CD4-positive, alpha-beta T cell (primary cell): ENCODE measurements at regions of chr19 and their contacts with region 1.

Region 1: GRCh38 chr19:15379083-15379995 is at the start of gene AKAP8:
- DNase-seq: peak; percentile 96 to 100 (median 98)
- ATAC-seq: peak; percentile 90
- H3K4me3 ChIP-seq: peak within 1 kb of the TSS; percentile 75
- H3K4me3 Mint-ChIP-seq: peak within 1 kb of the TSS; percentile 100
- H3K27ac ChIP-seq: peak within 1 kb of the TSS; percentile 96
- H3K27ac Mint-ChIP-seq: peak within 1 kb of the TSS; percentile 97
- H3K4me1 ChIP-seq: peaks cover 35% of the 10 kb centered on the region
- H3K4me1 Mint-ChIP-seq: peaks cover 48% of the 10 kb centered on the region
- H3K27me3 ChIP-seq: no peaks in the 10 kb centered on the region
- H3K27me3 Mint-ChIP-seq: no peaks in the 10 kb centered on the region
- CTCF ChIP-seq: no peak
- total RNA-seq, gene AKAP8: 87.5 to 90.1 TPM

Region 2: DNA sequence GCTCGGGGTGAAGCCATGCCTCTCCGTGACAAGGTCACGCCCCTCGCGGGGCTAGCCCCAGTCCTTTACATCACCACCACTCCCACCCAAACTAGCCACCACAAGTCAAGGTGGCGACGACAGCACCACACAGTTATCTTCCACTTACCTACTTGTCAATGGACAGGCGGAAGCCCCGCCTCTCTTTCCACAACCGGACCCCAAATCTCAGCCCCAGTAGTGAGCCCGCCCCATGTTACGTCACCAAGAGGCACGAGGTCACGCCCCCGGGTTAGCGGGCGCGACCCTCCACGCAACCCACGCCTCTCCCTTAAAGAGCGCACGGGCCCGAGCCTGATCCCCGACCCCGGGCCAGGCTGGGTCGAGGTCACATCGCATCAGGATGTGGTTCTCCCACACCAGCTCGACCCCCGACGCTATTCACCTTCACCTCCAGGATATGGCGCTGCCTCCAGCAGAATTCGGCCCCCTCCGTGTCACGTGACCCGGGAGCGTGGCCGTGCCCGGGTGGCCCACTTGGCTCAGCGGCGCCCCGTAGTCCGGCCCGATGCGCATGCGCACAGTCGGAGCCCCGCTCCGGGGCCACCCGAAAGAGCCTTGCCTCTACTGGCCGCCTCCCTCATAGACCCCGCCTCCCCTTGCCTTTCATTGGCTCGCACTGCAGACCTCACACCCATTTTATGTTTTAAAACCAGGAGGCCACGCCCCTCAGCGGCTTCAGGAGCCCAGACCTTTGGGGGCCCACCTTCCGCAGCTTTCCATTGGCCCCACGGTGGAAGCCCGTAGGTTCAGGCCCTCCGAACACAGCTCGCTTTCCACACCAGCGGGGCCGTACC is 253.9 kb before region 1 on chr19:
- CTCF ChIA-PET with region 1: no interaction called
- POLR2A ChIA-PET with region 1: interaction called, 14 read pairs
- intact Hi-C with region 1: no loop called
- DNase-seq: peak; percentile 92 to 98 (median 96)
- ATAC-seq: peak; percentile 85
- H3K4me3 ChIP-seq: peak overlapping the region; percentile 77
- H3K4me3 Mint-ChIP-seq: peak overlapping the region; percentile 99
- H3K27ac ChIP-seq: peak overlapping the region; percentile 87 to 97
- H3K27ac Mint-ChIP-seq: peak overlapping the region; percentile 96
- H3K4me1 ChIP-seq: peaks cover 32% of the 10 kb centered on the region
- H3K4me1 Mint-ChIP-seq: peaks cover 49% of the 10 kb centered on the region
- H3K27me3 ChIP-seq: no peaks in the 10 kb centered on the region
- H3K27me3 Mint-ChIP-seq: no peaks in the 10 kb centered on the region
- CTCF ChIP-seq: no peak

Region 3: DNA sequence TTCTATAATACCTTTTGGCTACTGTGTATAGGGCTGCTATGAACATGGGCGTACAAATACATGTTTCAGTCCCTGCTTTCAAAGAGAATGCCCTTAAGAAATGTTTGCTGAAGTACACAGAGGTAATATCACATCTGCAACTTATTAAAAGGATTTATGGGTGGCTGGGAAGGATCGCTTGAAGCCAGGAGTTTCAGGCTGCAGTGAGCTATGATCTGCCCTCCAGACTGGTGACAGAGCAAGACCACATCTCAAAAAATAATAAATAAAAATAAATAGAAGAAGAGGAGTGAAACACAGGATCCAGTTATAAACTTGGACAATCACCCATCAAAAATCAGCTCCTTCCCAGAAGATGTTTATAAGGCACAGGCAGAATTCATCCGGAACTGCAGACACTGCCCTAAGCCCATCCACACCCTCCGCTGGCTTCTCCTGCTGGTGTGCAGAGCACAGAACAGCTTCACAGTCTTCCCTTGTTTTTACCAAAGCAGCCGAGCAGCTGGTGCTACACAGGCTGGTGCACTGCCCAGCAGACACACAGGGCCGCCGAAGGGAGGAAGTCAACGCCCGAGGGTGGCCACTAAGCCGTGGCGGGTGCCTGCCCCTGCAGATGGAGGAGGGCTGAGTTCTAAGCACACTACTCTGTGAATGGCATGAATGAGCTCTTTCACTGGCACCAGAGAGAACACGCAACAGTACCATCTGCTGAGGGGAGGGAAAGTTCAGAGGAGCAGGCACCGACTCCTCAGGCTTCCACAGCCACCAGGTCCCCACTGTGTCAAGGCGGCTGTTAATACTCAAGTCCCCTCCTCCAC is 91.0 kb before region 1 on chr19:
- CTCF ChIA-PET with region 1: no interaction called
- POLR2A ChIA-PET with region 1: interaction called, 19 read pairs
- intact Hi-C with region 1: loop called in 1 of 2 experiments (anchors 5 kb)
- DNase-seq: peak in 1 of 14 experiments; percentile 24
- ATAC-seq: peak; percentile 23
- H3K4me3 ChIP-seq: no peak overlapping the region
- H3K4me3 Mint-ChIP-seq: peak overlapping the region; percentile 68
- H3K27ac ChIP-seq: no peak overlapping the region
- H3K27ac Mint-ChIP-seq: peak overlapping the region; percentile 75
- H3K4me1 ChIP-seq: peaks cover 96% of the 10 kb centered on the region
- H3K4me1 Mint-ChIP-seq: peaks cover 100% of the 10 kb centered on the region
- H3K27me3 ChIP-seq: no peaks in the 10 kb centered on the region
- H3K27me3 Mint-ChIP-seq: no peaks in the 10 kb centered on the region
- CTCF ChIP-seq: no peak

Region 4: GRCh38 chr19:15332311-15332996 is 46.9 kb before region 1 on chr19 and contains the start of gene BRD4:
- CTCF ChIA-PET with region 1: no interaction called
- POLR2A ChIA-PET with region 1: interaction called, 80 read pairs
- intact Hi-C with region 1: loop called (anchors 2 to 5 kb)
- DNase-seq: peak; percentile 59 to 92 (median 72)
- ATAC-seq: peak; percentile 63
- H3K4me3 ChIP-seq: peak within 1 kb of the TSS; percentile 90
- H3K4me3 Mint-ChIP-seq: peak within 1 kb of the TSS; percentile 96
- H3K27ac ChIP-seq: peak within 1 kb of the TSS; percentile 51 to 67
- H3K27ac Mint-ChIP-seq: peak within 1 kb of the TSS; percentile 88
- H3K4me1 ChIP-seq: peaks cover 45% of the 10 kb centered on the region
- H3K4me1 Mint-ChIP-seq: peaks cover 47% of the 10 kb centered on the region
- H3K27me3 ChIP-seq: no peaks in the 10 kb centered on the region
- H3K27me3 Mint-ChIP-seq: no peaks in the 10 kb centered on the region
- CTCF ChIP-seq: no peak
- total RNA-seq, gene BRD4: 101 to 102 TPM

Region 5: GRCh38 chr19:15466851-15467733 is 87.8 kb after region 1 on chr19:
- CTCF ChIA-PET with region 1: no interaction called
- POLR2A ChIA-PET with region 1: interaction called, 21 read pairs
- intact Hi-C with region 1: no loop called
- DNase-seq: peak in 13 of 14 experiments; percentile 31 to 87 (median 59)
- ATAC-seq: peak; percentile 43
- H3K4me3 ChIP-seq: no peak overlapping the region
- H3K4me3 Mint-ChIP-seq: peak overlapping the region; percentile 74
- H3K27ac ChIP-seq: peak overlapping the region; percentile 31 to 64
- H3K27ac Mint-ChIP-seq: peak overlapping the region; percentile 90
- H3K4me1 ChIP-seq: peaks cover 72% of the 10 kb centered on the region
- H3K4me1 Mint-ChIP-seq: peaks cover 58% of the 10 kb centered on the region
- H3K27me3 ChIP-seq: no peaks in the 10 kb centered on the region
- H3K27me3 Mint-ChIP-seq: no peaks in the 10 kb centered on the region
- CTCF ChIP-seq: no peak

Region 6: GRCh38 chr19:15595069-15595468 is 215.7 kb after region 1 on chr19:
- CTCF ChIA-PET with region 1: no interaction called
- POLR2A ChIA-PET with region 1: no interaction called
- intact Hi-C with region 1: no loop called
- DNase-seq: peak in 2 of 14 experiments; percentile 1 to 20
- ATAC-seq: no peak
- H3K4me3 ChIP-seq: no peak overlapping the region
- H3K4me3 Mint-ChIP-seq: no peak overlapping the region
- H3K27ac ChIP-seq: no peak overlapping the region
- H3K27ac Mint-ChIP-seq: no peak overlapping the region
- H3K4me1 ChIP-seq: no peaks in the 10 kb centered on the region
- H3K4me1 Mint-ChIP-seq: no peaks in the 10 kb centered on the region
- H3K27me3 ChIP-seq: peaks cover 10 to 14% of the 10 kb centered on the region in 2 experiments
- H3K27me3 Mint-ChIP-seq: peaks cover 44% of the 10 kb centered on the region
- CTCF ChIP-seq: no peak

Region 7: DNA sequence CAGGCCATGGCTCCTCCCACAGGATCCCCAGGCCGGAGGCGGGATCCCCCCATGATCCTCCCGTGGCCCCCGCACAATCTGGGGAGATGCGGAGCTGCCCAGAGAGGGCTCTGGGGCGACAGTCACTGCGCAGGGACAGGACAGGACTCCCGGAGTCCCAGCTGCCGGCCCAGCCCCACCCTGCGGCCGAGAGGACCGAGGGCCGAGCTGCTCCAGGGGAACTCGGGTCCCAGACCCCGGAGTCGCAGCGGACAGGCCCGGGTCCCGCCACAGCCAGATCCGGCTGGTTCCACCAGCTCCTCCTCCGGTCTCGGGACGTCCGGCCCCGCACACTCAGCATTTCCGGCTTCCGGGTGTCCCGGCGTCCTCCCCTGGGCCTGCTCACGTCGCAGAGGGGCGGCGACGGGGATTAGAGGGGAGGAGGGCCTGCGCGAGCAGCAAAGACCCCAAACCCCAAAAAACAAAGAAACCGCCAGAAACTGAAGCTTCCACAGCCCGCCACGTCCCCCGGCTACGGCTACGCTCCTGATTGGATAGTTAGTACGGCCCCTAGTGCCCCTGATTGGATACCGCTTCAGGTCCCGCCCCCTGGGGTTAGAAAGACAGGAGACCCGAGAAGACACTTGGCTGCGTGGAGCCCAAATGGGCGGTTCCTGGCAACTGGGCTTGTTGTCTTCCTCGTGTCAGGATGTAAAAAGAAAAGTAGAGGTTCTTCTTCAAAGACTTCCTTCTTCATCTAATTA is 457.4 kb after region 1 on chr19:
- CTCF ChIA-PET with region 1: no interaction called
- POLR2A ChIA-PET with region 1: interaction called, 12 read pairs
- intact Hi-C with region 1: no loop called
- DNase-seq: peak; percentile 86 to 98 (median 95)
- ATAC-seq: peak; percentile 86
- H3K4me3 ChIP-seq: peak overlapping the region; percentile 96
- H3K4me3 Mint-ChIP-seq: peak overlapping the region; percentile 96
- H3K27ac ChIP-seq: peak overlapping the region; percentile 97 to 99
- H3K27ac Mint-ChIP-seq: peak overlapping the region; percentile 92
- H3K4me1 ChIP-seq: peaks cover 20% of the 10 kb centered on the region
- H3K4me1 Mint-ChIP-seq: peaks cover 18% of the 10 kb centered on the region
- H3K27me3 ChIP-seq: no peaks in the 10 kb centered on the region
- H3K27me3 Mint-ChIP-seq: no peaks in the 10 kb centered on the region
- CTCF ChIP-seq: no peak